A549 (cell line): ENCODE measurements at regions of chr17 and their contacts with region 1.

Region 1: DNA sequence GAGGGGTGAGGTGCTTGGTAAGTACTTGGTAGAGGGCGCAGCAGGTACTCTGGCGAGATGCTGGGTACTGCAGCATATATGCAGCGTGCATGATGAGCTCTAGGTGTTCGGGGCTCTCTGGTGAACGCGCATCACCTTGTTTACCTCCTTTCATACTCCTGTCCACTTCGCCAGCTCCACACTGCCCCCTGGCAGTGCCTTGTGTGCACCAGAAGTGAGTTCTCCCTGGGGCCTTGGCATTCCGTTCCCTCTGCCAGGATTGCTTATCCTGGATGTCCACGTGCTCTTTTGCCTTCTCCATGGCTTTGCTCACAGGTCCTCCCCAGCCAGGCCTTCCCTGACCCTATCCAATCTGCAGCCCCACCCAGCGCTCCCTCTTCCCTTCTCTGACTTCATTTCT is 154.2 kb downstream of the MRM1 start:
- DNase-seq: peak; percentile 70 to 74
- ATAC-seq: peak; percentile 75 to 90
- H3K4me3 ChIP-seq: no peak overlapping the region
- H3K27ac ChIP-seq: no peak overlapping the region
- H3K4me1 ChIP-seq: no peaks in the 10 kb centered on the region
- CTCF ChIP-seq: peak; percentile 56
- EP300 ChIP-seq: no peak
- POLR2A ChIP-seq: no peak
- RAD21 ChIP-seq: peak; percentile 47 to 69; a peak in 4 of 5 replicates

Region 2: GRCh38 chr17:36722121-36722902 is 33.3 kb before region 1 on chr17:
- CTCF ChIA-PET with region 1: no interaction called
- POLR2A ChIA-PET with region 1: no interaction called
- DNase-seq: no peak
- ATAC-seq: peak; percentile 20 to 68; a peak in 3 of 6 replicates
- H3K4me3 ChIP-seq: peak overlapping the region; percentile 33; the same call in 2 of the 3 replicates
- H3K27ac ChIP-seq: peak overlapping the region; percentile 45 to 75; a peak in 4 of 6 replicates
- H3K4me1 ChIP-seq: peaks cover 3% of the 10 kb centered on the region; the same call in 1 of the 3 replicates
- CTCF ChIP-seq: no peak
- EP300 ChIP-seq: no peak
- POLR2A ChIP-seq: peak; percentile 7; the same call in 1 of the 2 replicates
- RAD21 ChIP-seq: no peak

Region 3: GRCh38 chr17:36768394-36768793 is 12.8 kb after region 1 on chr17:
- CTCF ChIA-PET with region 1: interaction called, 14 read pairs
- POLR2A ChIA-PET with region 1: no interaction called
- DNase-seq: no peak
- ATAC-seq: peak; percentile 32 to 78; a peak in 5 of 6 replicates
- H3K4me3 ChIP-seq: no peak overlapping the region
- H3K27ac ChIP-seq: no peak overlapping the region
- H3K4me1 ChIP-seq: no peaks in the 10 kb centered on the region
- CTCF ChIP-seq: peak; percentile 34
- EP300 ChIP-seq: no peak
- POLR2A ChIP-seq: no peak
- RAD21 ChIP-seq: peak; percentile 53 to 59

Region 4: GRCh38 chr17:36793976-36794375 is 38.4 kb after region 1 on chr17:
- CTCF ChIA-PET with region 1: no interaction called
- POLR2A ChIA-PET with region 1: no interaction called
- DNase-seq: no peak
- ATAC-seq: 0 out of 6 replicates have a peak, but pooled peaks of 1 of the 2 experiments have one; percentile 38
- H3K4me3 ChIP-seq: no peak overlapping the region
- H3K27ac ChIP-seq: no peak overlapping the region
- H3K4me1 ChIP-seq: no peaks in the 10 kb centered on the region
- CTCF ChIP-seq: no peak
- EP300 ChIP-seq: no peak
- POLR2A ChIP-seq: no peak
- RAD21 ChIP-seq: no peak

Region 5: DNA sequence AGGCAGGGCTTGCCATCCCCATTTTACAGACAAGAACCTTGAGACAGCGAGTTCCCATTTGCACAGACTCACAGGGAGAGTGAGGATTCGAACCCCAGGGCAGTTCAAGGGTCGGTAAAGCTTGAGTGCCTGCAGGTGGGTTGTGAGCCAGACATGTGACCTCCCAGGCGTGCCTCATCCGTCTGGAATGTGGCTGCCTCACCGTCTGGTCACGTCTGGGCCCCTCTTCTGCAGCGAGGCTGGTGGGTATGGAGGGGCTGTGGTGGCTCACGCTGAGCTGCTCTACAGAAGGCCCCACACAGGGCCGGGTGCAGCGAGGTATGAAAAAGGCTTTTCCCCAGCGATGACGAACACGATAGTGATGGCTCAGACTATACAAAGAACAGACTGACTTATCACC is 145.9 kb after region 1 on chr17:
- CTCF ChIA-PET with region 1: no interaction called
- POLR2A ChIA-PET with region 1: no interaction called
- DNase-seq: peak in 1 of 2 experiments; percentile 70
- ATAC-seq: peak; percentile 74 to 88
- H3K4me3 ChIP-seq: no peak overlapping the region
- H3K27ac ChIP-seq: peak overlapping the region; percentile 41 to 73; a peak in 5 of 6 replicates
- H3K4me1 ChIP-seq: peaks cover 12% of the 10 kb centered on the region
- CTCF ChIP-seq: no peak
- EP300 ChIP-seq: no peak
- POLR2A ChIP-seq: no peak
- RAD21 ChIP-seq: no peak